A549 (cell line): ENCODE measurements at regions of chr16 and their contacts with region 1.

Region 1: DNA sequence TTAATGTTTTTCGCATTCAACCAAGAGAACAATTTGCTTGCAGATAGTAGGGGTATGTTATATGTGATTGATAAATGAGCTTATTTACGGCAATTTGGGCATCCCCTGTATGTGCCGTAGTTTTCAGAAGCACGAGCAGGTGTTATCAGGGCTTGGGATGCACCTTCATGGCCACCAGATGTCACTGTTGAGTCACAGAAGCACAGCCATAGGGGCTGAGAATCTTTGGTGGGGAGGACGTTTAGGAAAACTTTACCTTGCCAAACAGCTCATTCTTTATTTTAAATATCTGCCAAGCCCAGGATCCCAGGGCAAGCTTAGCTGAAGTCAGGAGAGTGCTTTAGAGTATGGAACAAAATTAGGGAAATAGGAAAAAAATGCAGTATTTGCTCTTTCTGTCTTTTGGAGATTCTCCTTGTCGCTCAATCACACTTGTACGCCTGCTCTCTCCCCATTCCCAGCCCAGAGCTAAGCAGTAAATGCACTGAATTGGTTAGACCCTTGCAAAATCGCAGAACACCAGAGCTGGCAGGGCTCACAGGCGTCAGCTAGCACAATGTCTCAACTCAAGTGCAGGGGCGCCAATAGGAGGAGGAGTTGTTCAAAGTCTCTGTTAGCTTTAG is 93.6 kb upstream of the MPHOSPH6 start:
- DNase-seq: peak; percentile 48 to 51
- ATAC-seq: peak; percentile 86 to 97; a peak in 5 of 6 replicates
- H3K4me3 ChIP-seq: no peak overlapping the region
- H3K27ac ChIP-seq: no peak overlapping the region
- H3K4me1 ChIP-seq: no peaks in the 10 kb centered on the region
- CTCF ChIP-seq: peak; percentile 90
- EP300 ChIP-seq: no peak
- POLR2A ChIP-seq: no peak
- RAD21 ChIP-seq: peak; percentile 86 to 88

Region 2: DNA sequence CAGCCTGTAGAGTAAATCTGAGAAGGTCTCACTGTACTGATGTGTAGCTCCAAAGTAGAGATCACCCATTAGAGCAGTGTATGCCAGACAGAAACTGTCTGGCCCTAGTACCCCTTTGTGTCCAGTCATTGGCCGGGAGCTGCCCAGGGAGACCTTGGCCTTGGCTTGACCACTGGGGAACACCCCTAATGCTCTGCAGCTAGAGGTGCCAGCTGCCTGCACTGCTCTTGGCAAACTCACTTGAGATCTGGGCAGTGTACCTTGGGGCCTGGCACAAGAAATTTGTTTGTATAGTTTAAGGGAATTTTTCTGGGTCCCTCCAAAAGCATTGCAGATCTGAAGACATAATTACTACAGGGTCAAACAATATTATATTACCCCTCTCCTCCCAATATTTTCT is 15.0 kb before region 1 on chr16:
- CTCF ChIA-PET with region 1: interaction called, 34 read pairs
- POLR2A ChIA-PET with region 1: no interaction called
- DNase-seq: no peak
- ATAC-seq: no peak
- H3K4me3 ChIP-seq: no peak overlapping the region
- H3K27ac ChIP-seq: no peak overlapping the region
- H3K4me1 ChIP-seq: no peaks in the 10 kb centered on the region
- CTCF ChIP-seq: no peak
- EP300 ChIP-seq: no peak
- POLR2A ChIP-seq: no peak
- RAD21 ChIP-seq: no peak

Region 3: GRCh38 chr16:82293671-82294070 is 30.0 kb after region 1 on chr16:
- CTCF ChIA-PET with region 1: interaction called, 14 read pairs
- POLR2A ChIA-PET with region 1: no interaction called
- DNase-seq: no peak
- ATAC-seq: no peak
- H3K4me3 ChIP-seq: no peak overlapping the region
- H3K27ac ChIP-seq: no peak overlapping the region
- H3K4me1 ChIP-seq: no peaks in the 10 kb centered on the region
- CTCF ChIP-seq: no peak
- EP300 ChIP-seq: no peak
- POLR2A ChIP-seq: no peak
- RAD21 ChIP-seq: no peak

Region 4: GRCh38 chr16:82580298-82580890 is 316.8 kb after region 1 on chr16:
- CTCF ChIA-PET with region 1: interaction called, 10 read pairs
- POLR2A ChIA-PET with region 1: no interaction called
- DNase-seq: peak; percentile 8 to 10
- ATAC-seq: peak in 1 of 2 experiments; percentile 75; a peak in 3 of 6 replicates
- H3K4me3 ChIP-seq: no peak overlapping the region
- H3K27ac ChIP-seq: no peak overlapping the region
- H3K4me1 ChIP-seq: no peaks in the 10 kb centered on the region
- CTCF ChIP-seq: no peak
- EP300 ChIP-seq: no peak
- POLR2A ChIP-seq: no peak
- RAD21 ChIP-seq: peak; percentile 30 to 44; a peak in 3 of 5 replicates

Region 5: DNA sequence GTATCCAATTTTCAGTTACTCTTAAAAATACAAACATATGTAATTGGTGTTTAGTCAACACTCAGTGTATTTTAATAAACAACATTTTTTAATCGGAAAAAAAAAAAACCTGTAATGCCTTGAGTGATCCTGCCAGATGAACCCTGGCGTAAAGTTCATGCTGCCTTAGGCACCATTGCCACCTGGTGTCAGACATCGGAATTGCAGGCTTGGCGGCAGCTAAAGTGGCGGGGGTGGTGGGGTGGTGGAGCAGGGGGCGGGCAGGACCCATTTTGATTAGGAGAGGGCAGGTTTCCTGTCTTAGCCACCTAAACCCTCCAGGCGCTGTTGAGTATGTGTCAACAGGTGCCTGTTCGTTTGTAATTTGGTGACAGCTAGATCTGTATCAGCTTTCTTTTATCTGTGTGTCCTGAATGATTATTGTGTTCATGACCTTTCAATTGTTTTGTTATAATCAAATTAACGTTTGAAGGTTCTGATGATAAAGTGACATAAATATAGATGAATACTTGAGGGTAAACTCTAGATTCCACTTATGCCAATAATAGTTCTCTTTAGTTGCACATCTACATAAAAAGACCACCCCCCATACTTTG is 951.9 kb after region 1 on chr16:
- CTCF ChIA-PET with region 1: interaction called, 11 read pairs
- POLR2A ChIA-PET with region 1: no interaction called
- DNase-seq: peak; percentile 23 to 37
- ATAC-seq: peak; percentile 50 to 77; a peak in 3 of 6 replicates
- H3K4me3 ChIP-seq: no peak overlapping the region
- H3K27ac ChIP-seq: no peak overlapping the region
- H3K4me1 ChIP-seq: no peaks in the 10 kb centered on the region
- CTCF ChIP-seq: peak; percentile 47
- EP300 ChIP-seq: no peak
- POLR2A ChIP-seq: no peak
- RAD21 ChIP-seq: peak; percentile 64 to 79